ENCODE measurements at regions of chr12 and their contacts with region 1.

Region 1: GRCh38 chr12:26937875-26938700 is at the starts of genes FGFR1OP2 and INTS13:
- DNase-seq: peak; percentile 100
- ATAC-seq: peak; percentile 94
- H3K4me3 ChIP-seq: peak within 1 kb of the TSS; percentile 76
- H3K27ac ChIP-seq: peak within 1 kb of the TSS; percentile 85
- H3K4me1 ChIP-seq: peaks cover 39% of the 10 kb centered on the region
- H3K27me3 ChIP-seq: no peaks in the 10 kb centered on the region
- CTCF ChIP-seq: no peak
- total RNA-seq, gene FGFR1OP2: 43.4 and 74.3 TPM in 2 replicates
- total RNA-seq, gene INTS13: 61.8 and 74.1 TPM in 2 replicates

Region 2: DNA sequence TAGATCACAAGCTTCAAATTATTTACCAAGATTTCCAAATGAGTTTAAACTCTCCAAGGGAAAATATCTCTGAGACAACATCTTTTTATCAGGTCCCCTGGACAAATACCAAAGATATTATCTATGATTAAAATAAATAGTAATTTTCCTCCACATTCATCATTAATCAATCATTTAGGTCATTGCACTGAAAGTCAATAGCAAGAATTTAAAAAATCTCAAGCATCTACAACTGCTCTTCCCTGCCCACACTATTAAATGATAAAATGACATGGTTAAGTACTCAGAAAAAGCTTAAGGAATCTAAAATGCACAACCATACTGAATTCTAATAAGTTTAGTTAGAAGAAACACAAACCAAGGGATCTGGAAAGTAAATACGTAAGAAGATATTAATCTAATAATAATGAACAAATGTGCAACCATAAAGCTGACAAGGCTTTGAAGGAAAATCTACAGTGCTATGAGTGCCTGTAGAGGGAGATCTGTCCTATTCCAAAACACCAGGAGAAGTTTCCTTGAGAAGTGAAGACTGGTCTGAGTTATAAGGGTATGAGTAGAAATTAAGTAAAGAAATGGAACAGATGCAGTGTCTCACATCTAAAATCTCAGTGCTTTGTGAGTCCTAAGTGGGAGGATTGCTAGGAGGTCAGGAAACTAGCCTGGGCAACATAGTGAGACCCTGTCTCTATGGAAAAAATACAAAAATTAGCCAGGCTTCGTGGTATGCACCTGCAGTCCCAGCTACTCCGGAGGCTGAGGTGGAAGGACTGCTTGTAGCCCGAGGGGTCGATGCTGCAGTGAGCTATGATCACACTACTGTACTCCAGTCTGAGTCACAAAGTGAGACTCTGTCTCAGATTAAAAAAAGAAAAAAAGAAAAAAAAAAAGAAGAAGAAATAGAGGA is 19.5 kb before region 1 on chr12:
- CTCF ChIA-PET with region 1: no interaction called
- POLR2A ChIA-PET with region 1: no interaction called
- intact Hi-C with region 1: loop called (anchors 2 kb)
- DNase-seq: no peak
- ATAC-seq: peak; percentile 68
- H3K4me3 ChIP-seq: no peak overlapping the region
- H3K27ac ChIP-seq: no peak overlapping the region
- H3K4me1 ChIP-seq: no peaks in the 10 kb centered on the region
- H3K27me3 ChIP-seq: no peaks in the 10 kb centered on the region
- CTCF ChIP-seq: 0 out of 2 replicates have a peak, but pooled peaks have one; percentile 27

Region 3: GRCh38 chr12:27123642-27124041 is 185.6 kb after region 1 on chr12:
- CTCF ChIA-PET with region 1: no interaction called
- POLR2A ChIA-PET with region 1: no interaction called
- intact Hi-C with region 1: loop called (anchors 1 kb)
- DNase-seq: peak; percentile 58
- ATAC-seq: peak; percentile 67
- H3K4me3 ChIP-seq: no peak overlapping the region
- H3K27ac ChIP-seq: no peak overlapping the region
- H3K4me1 ChIP-seq: no peaks in the 10 kb centered on the region
- H3K27me3 ChIP-seq: no peaks in the 10 kb centered on the region
- CTCF ChIP-seq: peak; percentile 66

Region 4: DNA sequence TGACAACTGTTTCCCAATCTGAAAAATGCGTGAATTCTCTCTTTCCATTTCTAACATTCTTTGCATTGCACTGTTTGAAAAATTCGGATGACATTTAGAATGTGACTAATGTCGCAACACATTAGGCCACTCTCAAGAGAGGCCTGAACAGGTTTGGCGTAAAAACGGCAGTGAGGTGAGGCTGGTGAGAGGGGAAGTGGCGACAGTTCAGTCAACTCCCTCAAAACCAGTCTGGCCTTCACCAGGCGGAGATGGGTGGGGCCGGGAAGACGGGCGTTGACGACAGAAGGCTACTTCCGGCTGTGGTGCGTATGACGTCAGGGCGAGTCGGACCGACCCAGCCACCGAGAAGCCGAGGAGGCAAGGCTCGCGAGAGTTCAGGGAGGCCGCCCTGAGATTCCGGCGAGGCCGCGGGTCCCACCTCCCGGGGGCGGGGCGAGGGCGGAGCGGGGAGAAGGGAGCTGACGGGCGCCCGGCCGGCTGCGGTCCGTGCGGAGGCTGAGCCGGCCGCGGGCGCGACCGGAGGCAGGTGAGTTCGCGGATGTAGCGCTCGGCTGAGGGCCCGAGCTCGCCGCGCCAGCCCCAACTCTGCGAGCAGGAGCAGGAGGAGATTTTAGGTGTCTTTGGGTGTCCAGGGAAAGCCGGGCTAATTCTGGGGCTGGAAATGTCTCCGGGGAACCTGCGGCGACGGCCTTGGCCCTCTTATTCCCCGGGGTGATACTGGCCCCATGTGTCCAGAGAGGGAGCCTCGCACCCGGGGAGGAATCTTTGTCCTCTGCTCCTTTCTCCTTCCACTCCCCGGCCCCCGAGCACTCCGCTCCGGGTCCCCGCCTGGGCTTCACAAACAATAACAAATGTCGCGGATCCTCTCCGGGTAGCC is 306.0 kb after region 1 on chr12 and contains the start of gene STK38L:
- CTCF ChIA-PET with region 1: no interaction called
- POLR2A ChIA-PET with region 1: no interaction called
- intact Hi-C with region 1: loop called (anchors 2 kb)
- DNase-seq: peak; percentile 98
- ATAC-seq: peak; percentile 94
- H3K4me3 ChIP-seq: peak within 1 kb of the TSS; percentile 80
- H3K27ac ChIP-seq: peak within 1 kb of the TSS; percentile 40
- H3K4me1 ChIP-seq: peaks cover 28% of the 10 kb centered on the region
- H3K27me3 ChIP-seq: no peaks in the 10 kb centered on the region
- CTCF ChIP-seq: peak; percentile 51; the same call in 1 of the 2 replicates
- total RNA-seq, gene STK38L: 19.4 and 32.3 TPM in 2 replicates

Region 5: DNA sequence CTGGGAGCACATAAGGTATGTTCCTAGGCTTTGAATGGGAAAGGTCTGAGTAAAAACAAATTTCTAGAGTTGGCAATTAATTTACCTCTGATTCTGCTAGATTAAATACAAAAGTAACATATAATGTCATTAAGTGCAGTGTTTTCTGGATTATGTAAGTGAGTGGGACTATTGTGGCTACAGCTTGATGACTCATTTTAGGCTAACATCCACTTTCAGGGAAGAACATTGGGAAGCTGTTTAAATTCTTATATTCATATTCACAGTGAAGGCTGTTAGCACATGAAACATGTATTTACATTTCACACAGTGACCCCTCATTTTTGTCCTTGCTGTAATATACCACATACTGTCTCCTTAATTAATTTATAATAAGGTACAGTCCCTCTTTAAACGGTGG is 381.3 kb after region 1 on chr12:
- CTCF ChIA-PET with region 1: no interaction called
- POLR2A ChIA-PET with region 1: no interaction called
- intact Hi-C with region 1: loop called (anchors 5 kb)
- DNase-seq: peak; percentile 81
- ATAC-seq: peak; percentile 58
- H3K4me3 ChIP-seq: no peak overlapping the region
- H3K27ac ChIP-seq: peak overlapping the region; percentile 70
- H3K4me1 ChIP-seq: peaks cover 52% of the 10 kb centered on the region
- H3K27me3 ChIP-seq: no peaks in the 10 kb centered on the region
- CTCF ChIP-seq: no peak